ENCODE measurements at regions of chr7 and their contacts with region 1.

Region 1: GRCh38 chr7:66493235-66494181 is 135.2 kb upstream of the KCTD7 start:
- DNase-seq: peak; percentile 94
- ATAC-seq: peak; percentile 94
- H3K4me3 ChIP-seq: peak overlapping the region; percentile 69 to 89 (median 79)
- H3K27ac ChIP-seq: peak overlapping the region; percentile 88
- H3K4me1 ChIP-seq: peaks cover 53% of the 10 kb centered on the region
- H3K27me3 ChIP-seq: no peaks in the 10 kb centered on the region
- CTCF ChIP-seq: peak; percentile 50
- EP300 ChIP-seq: 0 out of 4 replicates have a peak, but pooled peaks of 1 of the 2 experiments have one; percentile 24
- POLR2A ChIP-seq: peak; percentile 92 to 96
- RAD21 ChIP-seq: peak; percentile 61; the same call in 1 of the 2 replicates

Region 2: GRCh38 chr7:65746398-65746669 is 747.2 kb before region 1 on chr7:
- CTCF ChIA-PET with region 1: no interaction called
- POLR2A ChIA-PET with region 1: no interaction called
- in situ Hi-C with region 1: no loop called
- intact Hi-C with region 1: no loop called
- DNase-seq: no peak
- ATAC-seq: no peak
- H3K4me3 ChIP-seq: no peak overlapping the region
- H3K27ac ChIP-seq: no peak overlapping the region
- H3K4me1 ChIP-seq: peaks cover 29% of the 10 kb centered on the region
- H3K27me3 ChIP-seq: no peaks in the 10 kb centered on the region; a peak in 1 of 5 replicates
- CTCF ChIP-seq: no peak
- EP300 ChIP-seq: no peak
- POLR2A ChIP-seq: no peak
- RAD21 ChIP-seq: no peak

Region 3: GRCh38 chr7:66204822-66205740 is 288.4 kb before region 1 on chr7 and contains the start of gene TPST1:
- CTCF ChIA-PET with region 1: no interaction called
- POLR2A ChIA-PET with region 1: interaction called, 22 read pairs
- in situ Hi-C with region 1: no loop called
- intact Hi-C with region 1: loop called (anchors 5 kb)
- DNase-seq: peak; percentile 89
- ATAC-seq: peak; percentile 94
- H3K4me3 ChIP-seq: peak within 1 kb of the TSS; percentile 94 to 99 (median 98)
- H3K27ac ChIP-seq: peak within 1 kb of the TSS; percentile 53
- H3K4me1 ChIP-seq: peaks cover 65% of the 10 kb centered on the region
- H3K27me3 ChIP-seq: no peaks in the 10 kb centered on the region; a peak in 1 of 5 replicates
- CTCF ChIP-seq: peak; percentile 80
- EP300 ChIP-seq: 0 out of 4 replicates have a peak, but pooled peaks of 1 of the 2 experiments have one; percentile 17
- POLR2A ChIP-seq: peak; percentile 88 to 98
- RAD21 ChIP-seq: peak; percentile 87
- total RNA-seq, gene TPST1: 11.8 and 24.3 TPM in 2 replicates

Region 4: GRCh38 chr7:66443946-66444345 is 49.6 kb before region 1 on chr7:
- CTCF ChIA-PET with region 1: no interaction called
- POLR2A ChIA-PET with region 1: interaction called, 24 read pairs
- in situ Hi-C with region 1: no loop called
- intact Hi-C with region 1: loop called (anchors 2 kb)
- DNase-seq: peak; percentile 6
- ATAC-seq: no peak
- H3K4me3 ChIP-seq: no peak overlapping the region
- H3K27ac ChIP-seq: peak overlapping the region; percentile 29
- H3K4me1 ChIP-seq: peaks cover 54% of the 10 kb centered on the region
- H3K27me3 ChIP-seq: no peaks in the 10 kb centered on the region
- CTCF ChIP-seq: no peak
- EP300 ChIP-seq: no peak
- POLR2A ChIP-seq: no peak
- RAD21 ChIP-seq: no peak

Region 5: DNA sequence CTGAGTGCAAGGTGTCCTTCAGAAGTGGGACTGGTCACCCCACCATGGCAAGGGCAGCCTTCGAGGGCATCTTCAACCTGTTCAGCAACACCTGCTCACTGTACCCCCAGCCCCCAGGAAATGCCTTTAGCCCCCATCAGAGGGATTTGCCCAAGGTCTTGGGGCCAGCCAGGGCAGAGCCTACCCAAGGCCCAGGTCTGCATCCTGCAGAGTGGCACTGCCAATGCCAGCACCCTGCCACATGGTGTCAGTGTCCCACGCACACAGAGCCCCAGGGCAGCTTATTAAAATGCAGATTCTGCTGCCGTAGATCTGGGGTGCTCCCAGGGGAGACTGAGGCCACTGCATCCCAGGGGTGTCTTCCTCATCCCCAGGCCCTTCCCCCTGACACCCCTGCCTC is 29.0 kb after region 1 on chr7:
- CTCF ChIA-PET with region 1: no interaction called
- POLR2A ChIA-PET with region 1: interaction called, 28 read pairs
- in situ Hi-C with region 1: no loop called
- intact Hi-C with region 1: no loop called
- DNase-seq: no peak
- ATAC-seq: peak; percentile 21
- H3K4me3 ChIP-seq: no peak overlapping the region
- H3K27ac ChIP-seq: no peak overlapping the region
- H3K4me1 ChIP-seq: peaks cover 46% of the 10 kb centered on the region
- H3K27me3 ChIP-seq: no peaks in the 10 kb centered on the region
- CTCF ChIP-seq: peak; percentile 64
- EP300 ChIP-seq: no peak
- POLR2A ChIP-seq: no peak
- RAD21 ChIP-seq: peak; percentile 53; the same call in 1 of the 2 replicates

Region 6: DNA sequence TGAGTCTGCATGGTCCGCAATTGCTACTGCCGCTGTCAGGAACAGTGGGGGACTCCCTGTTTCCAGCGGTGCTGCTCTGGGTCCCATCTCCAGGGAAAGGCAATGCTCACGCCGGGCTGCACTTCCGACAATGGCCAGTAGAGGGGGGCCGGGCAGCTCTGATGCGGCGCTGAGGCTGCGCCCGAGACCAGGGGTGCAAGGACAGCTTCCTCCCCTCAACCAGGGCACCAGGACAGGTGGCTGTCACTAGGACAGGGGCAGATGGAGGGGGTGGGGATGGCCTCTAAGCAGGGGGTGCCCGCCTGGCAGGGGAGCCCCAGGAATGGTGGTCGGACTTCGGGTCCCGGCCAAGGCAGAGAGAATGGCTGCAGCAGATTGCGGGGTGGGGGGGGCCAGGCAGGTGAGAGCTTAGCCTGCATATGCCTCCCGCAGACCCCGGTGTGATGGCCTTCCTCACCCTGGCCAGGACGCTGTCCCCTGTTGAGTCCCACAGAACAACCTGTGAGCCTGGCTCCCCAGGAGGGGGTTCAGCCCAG is 64.2 kb after region 1 on chr7:
- CTCF ChIA-PET with region 1: no interaction called
- POLR2A ChIA-PET with region 1: no interaction called
- in situ Hi-C with region 1: no loop called
- intact Hi-C with region 1: no loop called
- DNase-seq: no peak
- ATAC-seq: peak; percentile 86
- H3K4me3 ChIP-seq: no peak overlapping the region
- H3K27ac ChIP-seq: no peak overlapping the region
- H3K4me1 ChIP-seq: no peaks in the 10 kb centered on the region
- H3K27me3 ChIP-seq: no peaks in the 10 kb centered on the region
- CTCF ChIP-seq: peak; percentile 94
- EP300 ChIP-seq: no peak
- POLR2A ChIP-seq: no peak
- RAD21 ChIP-seq: peak; percentile 89

Measured in HepG2 (cell line).